ENCODE measurements at regions of chr6 and their contacts with region 1.

Region 1: DNA sequence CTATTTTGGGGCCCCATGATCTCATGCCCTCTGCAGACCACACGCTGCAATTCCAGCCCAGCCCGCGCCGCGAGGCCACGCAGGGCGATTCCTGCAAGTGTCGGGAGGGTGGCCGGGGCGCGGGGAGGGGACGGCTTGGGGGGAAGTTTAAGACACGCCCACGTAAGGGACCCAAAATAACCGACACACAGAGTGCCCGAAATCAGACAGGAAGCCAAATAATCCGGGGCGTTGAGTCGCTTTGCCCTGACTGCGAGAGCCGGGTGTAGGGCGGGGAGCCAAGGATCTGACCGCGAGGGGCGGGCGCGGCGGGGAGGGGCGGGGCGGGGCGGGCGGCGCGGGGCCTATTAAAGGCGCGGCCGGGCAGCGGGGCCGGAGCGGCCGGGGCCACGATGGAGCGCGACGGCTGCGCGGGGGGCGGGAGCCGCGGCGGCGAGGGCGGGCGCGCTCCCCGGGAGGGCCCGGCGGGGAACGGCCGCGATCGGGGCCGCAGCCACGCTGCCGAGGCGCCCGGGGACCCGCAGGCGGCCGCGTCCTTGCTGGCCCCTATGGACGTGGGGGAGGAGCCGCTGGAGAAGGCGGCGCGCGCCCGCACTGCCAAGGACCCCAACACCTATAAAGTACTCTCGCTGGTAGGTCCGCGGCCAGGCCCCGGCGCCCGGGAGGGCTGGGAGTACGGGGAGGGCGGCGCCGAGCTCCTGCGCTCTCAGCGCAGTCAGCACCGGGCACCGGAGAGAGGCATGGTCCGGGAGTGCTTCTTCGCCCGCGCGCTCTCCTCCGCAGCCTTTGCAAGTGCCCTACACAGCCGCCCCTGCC is at the start of gene ENPP1:
- DNase-seq: peak; percentile 61 to 65
- H3K4me3 ChIP-seq: peak within 1 kb of the TSS; percentile 57
- H3K4me3 Mint-ChIP-seq: peak within 1 kb of the TSS; percentile 86
- H3K27ac Mint-ChIP-seq: no peak within 1 kb of the TSS
- H3K4me1 ChIP-seq: peaks cover 6% of the 10 kb centered on the region; the same call in 1 of the 2 replicates
- H3K4me1 Mint-ChIP-seq: peaks cover 9% of the 10 kb centered on the region
- H3K27me3 ChIP-seq: no peaks in the 10 kb centered on the region
- H3K27me3 Mint-ChIP-seq: peaks cover 18% of the 10 kb centered on the region
- CTCF ChIP-seq: peak in 1 of 2 experiments; percentile 40
- total RNA-seq, gene ENPP1: 4.6 and 4.8 TPM in 2 replicates

Region 2: DNA sequence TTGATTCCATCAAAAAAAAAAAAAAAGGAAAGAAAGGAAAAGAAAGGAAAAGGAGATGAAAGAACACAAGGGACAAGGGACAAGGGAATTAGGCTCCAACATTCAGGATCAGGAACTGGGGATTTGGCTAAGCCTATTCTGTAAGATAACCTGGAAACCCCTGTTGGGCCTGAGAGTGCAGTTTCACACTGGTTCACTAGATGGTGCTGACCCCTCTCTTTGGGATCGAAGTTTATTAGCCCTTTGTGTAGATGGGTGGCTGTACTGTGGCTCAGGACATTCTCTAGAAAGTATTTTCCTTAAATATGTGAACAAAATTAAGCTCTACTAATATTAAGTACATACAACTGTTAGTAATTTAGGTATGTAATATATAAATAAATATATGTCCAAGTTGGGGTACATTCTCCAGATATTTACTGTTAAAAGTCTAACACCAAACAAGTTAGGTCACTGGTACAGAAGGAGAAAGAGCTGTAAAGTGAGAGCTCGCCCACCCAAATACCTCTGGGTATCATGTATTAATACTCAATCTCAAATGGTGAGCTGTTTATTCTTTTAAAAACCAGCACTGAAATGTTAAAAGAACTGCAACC is 112.9 kb before region 1 on chr6:
- CTCF ChIA-PET with region 1: no interaction called
- POLR2A ChIA-PET with region 1: no interaction called
- intact Hi-C with region 1: loop called (anchors 5 kb)
- DNase-seq: peak; percentile 60 to 65
- H3K4me3 ChIP-seq: no peak overlapping the region
- H3K4me3 Mint-ChIP-seq: no peak overlapping the region
- H3K27ac Mint-ChIP-seq: no peak overlapping the region
- H3K4me1 ChIP-seq: no peaks in the 10 kb centered on the region
- H3K4me1 Mint-ChIP-seq: no peaks in the 10 kb centered on the region
- H3K27me3 ChIP-seq: no peaks in the 10 kb centered on the region
- H3K27me3 Mint-ChIP-seq: no peaks in the 10 kb centered on the region
- CTCF ChIP-seq: peak; percentile 76 to 86